ENCODE measurements at regions of chr19 and their contacts with region 1.

Region 1: DNA sequence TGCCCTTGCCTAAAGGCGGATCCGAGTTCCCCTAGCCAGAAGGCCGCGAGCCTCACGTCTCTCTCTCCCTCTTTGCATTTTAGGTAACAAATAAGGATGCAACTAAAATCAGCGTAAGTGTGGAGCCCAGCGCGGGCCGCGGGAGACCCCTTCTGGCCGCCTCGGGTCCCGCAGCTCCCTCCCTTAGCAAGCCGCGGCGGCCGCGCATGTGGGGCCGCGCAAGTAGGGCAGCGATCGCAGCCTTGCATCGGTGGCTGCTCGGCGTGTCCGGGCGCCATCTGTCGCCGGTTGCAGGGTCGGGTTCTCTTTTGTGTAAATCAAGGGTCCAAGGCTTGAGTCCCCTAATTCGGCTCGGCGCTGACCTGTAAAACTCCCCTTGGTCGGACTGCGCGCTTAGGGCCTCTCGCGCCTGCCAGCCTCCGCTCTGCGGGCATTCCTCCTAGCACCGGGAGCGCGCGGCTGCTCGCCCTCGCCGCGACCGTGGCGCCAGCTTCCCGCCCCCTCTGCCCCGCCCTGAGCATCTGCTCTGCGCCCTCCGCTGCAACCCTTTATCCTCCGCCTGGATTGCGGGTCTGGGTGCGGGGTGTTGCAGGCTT is 2.7 kb downstream of the VSTM2B start:
- DNase-seq: peak; percentile 59
- ATAC-seq: peak; percentile 87 to 89

Region 2: GRCh38 chr19:29294343-29294811 is 234.1 kb before region 1 on chr19:
- intact Hi-C with region 1: loop called in 1 of 2 experiments (anchors 10 kb)
- DNase-seq: no peak
- ATAC-seq: no peak

Measured in left cardiac atrium (tissue), 4 donors.